HepG2 (cell line): ENCODE measurements at regions of chr4 and their contacts with region 1.

Region 1: DNA sequence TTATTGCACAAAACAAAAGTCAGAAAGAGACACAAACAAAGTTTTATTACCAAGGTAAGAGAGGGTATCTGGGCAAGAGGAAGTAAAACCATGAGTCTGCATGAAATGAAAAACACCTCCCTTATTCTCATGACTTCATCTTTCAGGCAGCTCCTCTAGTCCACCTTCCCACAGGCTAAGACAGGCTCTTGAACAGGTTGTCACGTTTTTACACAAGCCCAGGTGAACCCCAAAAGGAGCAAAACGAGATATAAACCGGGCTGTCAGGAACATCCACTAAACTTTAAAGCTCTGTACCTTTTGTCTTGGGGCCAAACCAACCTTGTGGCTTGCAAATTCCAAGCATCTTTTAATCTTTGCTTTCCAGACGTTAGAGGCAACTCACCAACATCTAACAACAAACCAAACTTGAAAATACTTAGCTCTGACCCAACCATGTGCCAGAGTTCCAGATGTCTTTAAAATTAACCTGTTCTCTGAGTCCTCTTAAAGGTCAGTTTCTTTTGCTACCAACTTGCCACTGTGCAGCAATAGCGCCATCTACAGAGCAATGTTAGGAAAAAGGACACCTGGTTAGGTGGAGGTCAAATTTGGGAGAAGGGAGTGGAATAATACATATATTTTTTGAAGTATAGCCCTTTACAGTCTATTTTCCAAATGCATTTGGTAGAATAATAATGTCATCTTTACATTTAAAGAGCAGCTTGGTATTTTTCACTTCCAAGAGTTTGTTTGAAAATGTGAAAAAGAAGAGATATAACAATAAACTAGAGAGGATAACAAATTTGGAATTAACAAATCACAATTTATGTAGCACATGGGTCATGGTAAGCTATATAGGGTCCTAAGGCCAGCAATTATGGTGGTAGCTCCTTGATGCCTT is 73.1 kb downstream of the QRFPR start:
- DNase-seq: peak; percentile 34
- ATAC-seq: peak; percentile 61; the same call in 2 of the 3 replicates
- H3K4me3 ChIP-seq: no peak overlapping the region
- H3K27ac ChIP-seq: no peak overlapping the region
- H3K4me1 ChIP-seq: no peaks in the 10 kb centered on the region
- H3K27me3 ChIP-seq: no peaks in the 10 kb centered on the region
- CTCF ChIP-seq: peak; percentile 56
- EP300 ChIP-seq: no peak
- POLR2A ChIP-seq: no peak
- RAD21 ChIP-seq: 0 out of 2 replicates have a peak, but pooled peaks have one; percentile 17

Region 2: DNA sequence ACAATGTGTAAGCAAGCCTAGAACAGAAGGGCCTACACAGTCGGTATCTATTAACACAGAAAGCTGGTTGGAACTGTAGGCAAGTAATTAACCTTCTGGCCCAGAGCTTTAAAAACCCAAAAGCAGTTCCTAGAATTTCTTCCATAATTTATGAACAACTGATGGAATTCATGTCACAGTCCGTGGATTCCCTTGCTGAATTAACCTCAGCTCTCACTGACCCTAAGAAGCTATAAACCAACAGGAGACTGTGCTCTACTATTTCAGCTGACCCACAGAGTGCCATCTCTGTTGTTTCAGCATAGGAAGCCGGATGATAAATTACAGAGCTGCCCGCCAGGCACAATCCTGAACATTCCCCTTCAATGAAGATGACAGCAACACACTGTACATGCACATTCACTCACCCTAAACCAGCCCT is 542.4 kb before region 1 on chr4:
- CTCF ChIA-PET with region 1: no interaction called
- POLR2A ChIA-PET with region 1: no interaction called
- in situ Hi-C with region 1: no loop called
- intact Hi-C with region 1: no loop called
- DNase-seq: no peak
- ATAC-seq: no peak
- H3K4me3 ChIP-seq: no peak overlapping the region
- H3K27ac ChIP-seq: no peak overlapping the region
- H3K4me1 ChIP-seq: no peaks in the 10 kb centered on the region
- H3K27me3 ChIP-seq: no peaks in the 10 kb centered on the region
- CTCF ChIP-seq: no peak
- EP300 ChIP-seq: no peak
- POLR2A ChIP-seq: no peak
- RAD21 ChIP-seq: no peak

Region 3: DNA sequence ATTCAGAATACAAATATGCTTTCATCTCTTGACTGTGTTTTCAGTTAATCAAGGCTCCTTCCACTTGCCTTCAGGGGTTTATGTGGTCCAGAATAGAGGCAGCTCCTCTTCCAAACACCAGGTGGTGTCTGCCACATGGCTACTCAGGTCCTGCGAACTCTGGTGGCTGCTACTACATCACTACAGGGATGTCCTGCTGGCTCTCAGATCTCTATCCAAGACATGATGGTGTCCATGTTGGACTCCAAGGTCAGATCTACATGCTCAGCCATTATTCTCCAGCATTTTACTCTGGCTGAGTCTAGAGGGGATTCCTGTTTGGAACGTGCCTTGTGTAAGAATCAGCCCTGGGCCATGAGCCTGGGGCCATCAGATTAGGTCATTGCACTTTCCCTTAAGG is 30.1 kb before region 1 on chr4:
- CTCF ChIA-PET with region 1: interaction called, 5 read pairs
- POLR2A ChIA-PET with region 1: no interaction called
- in situ Hi-C with region 1: no loop called
- intact Hi-C with region 1: loop called (anchors 1 kb)
- DNase-seq: peak; percentile 27
- ATAC-seq: peak; percentile 100
- H3K4me3 ChIP-seq: no peak overlapping the region
- H3K27ac ChIP-seq: no peak overlapping the region
- H3K4me1 ChIP-seq: no peaks in the 10 kb centered on the region
- H3K27me3 ChIP-seq: no peaks in the 10 kb centered on the region
- CTCF ChIP-seq: peak; percentile 46
- EP300 ChIP-seq: no peak
- POLR2A ChIP-seq: no peak
- RAD21 ChIP-seq: peak; percentile 53

Region 4: DNA sequence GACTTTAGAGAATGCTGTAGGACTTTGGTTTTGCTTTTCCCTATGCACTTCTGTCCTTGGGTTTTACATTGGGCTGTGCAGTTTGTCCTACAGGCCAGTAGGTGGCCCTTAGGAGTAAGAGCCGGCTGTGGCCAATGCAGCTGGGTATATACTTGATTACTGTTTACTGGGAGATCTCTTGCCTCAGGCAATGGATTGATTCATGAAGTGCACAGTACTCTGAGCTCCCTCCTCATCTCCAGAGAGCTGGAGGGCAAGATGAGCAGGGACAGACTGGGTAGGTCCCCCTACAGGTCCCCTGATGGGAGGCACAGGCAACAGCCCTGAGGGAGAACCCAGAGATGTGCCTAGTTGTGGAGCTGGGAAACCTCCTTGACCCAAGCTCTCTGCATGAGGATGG is 176.9 kb after region 1 on chr4:
- CTCF ChIA-PET with region 1: no interaction called
- POLR2A ChIA-PET with region 1: no interaction called
- in situ Hi-C with region 1: no loop called
- intact Hi-C with region 1: no loop called
- DNase-seq: peak; percentile 36
- ATAC-seq: peak; percentile 98
- H3K4me3 ChIP-seq: no peak overlapping the region
- H3K27ac ChIP-seq: no peak overlapping the region
- H3K4me1 ChIP-seq: no peaks in the 10 kb centered on the region
- H3K27me3 ChIP-seq: no peaks in the 10 kb centered on the region; a peak in 1 of 5 replicates
- CTCF ChIP-seq: peak; percentile 74
- EP300 ChIP-seq: no peak
- POLR2A ChIP-seq: no peak
- RAD21 ChIP-seq: peak; percentile 27; the same call in 1 of the 2 replicates